Activated CD4-positive, alpha-beta T cell treated with anti-CD3 and anti-CD28 coated beads for 36 hours (primary cell): ENCODE measurements at regions of chr17 and their contacts with region 1.

Region 1: DNA sequence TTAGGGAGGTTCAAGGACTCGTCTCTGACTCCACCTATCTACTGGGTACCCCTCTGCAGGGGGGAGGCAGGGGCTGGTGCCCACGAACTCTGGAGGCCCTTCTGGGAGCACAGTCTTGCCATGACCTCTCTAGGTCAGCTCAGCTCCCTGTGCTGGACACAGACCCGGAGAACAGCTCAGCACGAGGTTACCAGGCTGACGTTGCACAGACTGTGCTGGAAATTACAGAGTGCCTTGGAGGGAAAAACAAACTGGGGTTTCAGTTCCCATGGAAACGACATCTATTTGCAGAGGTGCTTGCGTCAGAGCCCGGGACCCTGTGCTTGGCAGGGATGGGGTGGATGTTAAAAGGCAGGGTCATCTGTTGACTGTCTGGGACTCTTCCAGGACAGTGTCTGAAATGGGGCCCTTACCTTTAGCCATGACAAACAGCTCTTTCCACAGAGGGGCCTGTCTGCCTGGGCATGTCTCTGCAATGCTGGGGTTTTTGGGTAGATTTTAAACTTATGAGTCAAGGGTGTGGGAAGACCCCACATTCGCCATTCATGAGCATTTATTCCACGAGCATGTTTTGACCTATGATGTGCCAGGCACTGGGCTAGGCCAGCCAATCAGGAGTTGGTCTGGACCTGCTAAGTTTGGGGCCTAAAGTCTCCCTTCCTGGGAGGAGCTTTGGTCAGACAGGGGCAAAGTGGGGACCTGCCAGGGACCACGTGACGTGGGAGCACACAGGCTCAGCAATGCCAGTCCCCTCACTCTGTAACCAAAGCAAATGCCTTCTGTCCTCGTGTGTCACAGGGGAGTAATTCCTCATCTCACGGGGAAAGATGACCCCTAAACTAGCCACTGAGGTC is 22.5 kb downstream of the CCR7 start:
- DNase-seq: peak; percentile 76
- ATAC-seq: peak; percentile 52
- H3K4me3 Mint-ChIP-seq: peak overlapping the region; percentile 63
- H3K27ac Mint-ChIP-seq: peak overlapping the region; percentile 98
- H3K4me1 Mint-ChIP-seq: peaks cover 88% of the 10 kb centered on the region
- H3K27me3 Mint-ChIP-seq: no peaks in the 10 kb centered on the region

Region 2: DNA sequence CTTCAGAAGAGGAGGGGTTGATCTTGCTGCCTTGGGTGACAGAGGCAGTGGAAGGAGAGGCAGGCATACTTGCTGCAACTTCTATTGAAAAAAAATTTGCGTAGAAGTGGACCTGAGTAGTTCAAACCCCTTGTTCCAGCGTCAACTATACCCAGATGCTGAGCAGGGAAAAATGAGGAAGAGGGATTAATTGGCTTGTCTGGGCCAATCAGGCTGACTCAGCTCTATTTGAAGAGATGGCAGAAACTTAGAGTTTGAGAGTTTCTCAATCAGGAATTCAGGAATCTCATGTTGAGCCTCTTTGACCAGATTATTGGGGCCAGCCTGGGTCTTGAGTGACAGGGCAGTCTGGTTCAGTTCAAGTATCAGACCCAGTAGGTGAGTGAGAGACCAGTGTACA is 384.8 kb before region 1 on chr17:
- CTCF ChIA-PET with region 1: no interaction called
- POLR2A ChIA-PET with region 1: no interaction called
- intact Hi-C with region 1: no loop called
- DNase-seq: no peak
- ATAC-seq: no peak
- H3K4me3 Mint-ChIP-seq: no peak overlapping the region
- H3K27ac Mint-ChIP-seq: peak overlapping the region; percentile 24
- H3K4me1 Mint-ChIP-seq: peaks cover 35% of the 10 kb centered on the region
- H3K27me3 Mint-ChIP-seq: no peaks in the 10 kb centered on the region

Region 3: GRCh38 chr17:40417609-40418427 is 125.0 kb before region 1 on chr17 and contains the start of gene TOP2A:
- CTCF ChIA-PET with region 1: interaction called, 12 read pairs
- POLR2A ChIA-PET with region 1: interaction called, 11 read pairs
- intact Hi-C with region 1: loop called in 1 of 2 experiments (anchors 2 kb)
- DNase-seq: peak; percentile 95
- ATAC-seq: peak; percentile 99
- H3K4me3 Mint-ChIP-seq: peak within 1 kb of the TSS; percentile 86
- H3K27ac Mint-ChIP-seq: peak within 1 kb of the TSS; percentile 89
- H3K4me1 Mint-ChIP-seq: peaks cover 24% of the 10 kb centered on the region
- H3K27me3 Mint-ChIP-seq: no peaks in the 10 kb centered on the region
- total RNA-seq, gene TOP2A: 245 to 322 TPM

Region 4: GRCh38 chr17:40564883-40565768 is 22.3 kb after region 1 on chr17 and contains the start of gene CCR7:
- CTCF ChIA-PET with region 1: interaction called, 403 read pairs
- POLR2A ChIA-PET with region 1: interaction called, 179 read pairs
- intact Hi-C with region 1: loop called (anchors 1 kb)
- DNase-seq: peak; percentile 92
- ATAC-seq: peak; percentile 28
- H3K4me3 Mint-ChIP-seq: peak within 1 kb of the TSS; percentile 94
- H3K27ac Mint-ChIP-seq: peak within 1 kb of the TSS; percentile 98
- H3K4me1 Mint-ChIP-seq: peaks cover 48% of the 10 kb centered on the region
- H3K27me3 Mint-ChIP-seq: no peaks in the 10 kb centered on the region
- total RNA-seq, gene CCR7: 325 to 389 TPM

Region 5: DNA sequence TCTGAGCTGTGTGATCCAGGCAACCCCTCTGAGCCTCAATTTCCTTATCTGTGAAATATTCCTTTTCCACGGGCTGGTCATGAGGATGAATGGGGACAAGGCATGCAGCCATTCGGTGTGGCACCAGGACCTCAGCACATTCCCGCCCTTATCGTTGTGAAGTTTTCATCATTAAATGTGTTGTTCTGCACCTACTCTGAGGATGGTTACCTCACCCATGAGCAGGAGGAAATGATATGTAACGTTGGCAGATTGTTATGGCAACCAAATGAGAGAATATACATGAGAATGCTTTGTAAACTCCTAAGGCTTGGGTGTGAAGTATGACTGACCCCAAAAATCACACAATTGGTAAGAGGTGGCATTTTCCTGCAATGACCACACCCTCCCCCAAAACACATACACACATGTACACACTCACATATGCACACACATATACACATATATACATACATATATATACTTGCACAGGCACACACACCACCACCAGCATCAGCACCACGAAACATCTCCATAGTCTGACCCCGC is 65.3 kb after region 1 on chr17:
- CTCF ChIA-PET with region 1: interaction called, 3 read pairs
- POLR2A ChIA-PET with region 1: interaction called, 14 read pairs
- intact Hi-C with region 1: loop called in 1 of 2 experiments (anchors 2 kb)
- DNase-seq: peak; percentile 52
- ATAC-seq: peak; percentile 61
- H3K4me3 Mint-ChIP-seq: peak overlapping the region; percentile 39
- H3K27ac Mint-ChIP-seq: peak overlapping the region; percentile 86
- H3K4me1 Mint-ChIP-seq: peaks cover 98% of the 10 kb centered on the region
- H3K27me3 Mint-ChIP-seq: no peaks in the 10 kb centered on the region